ENCODE measurements at regions of chr11 and their contacts with region 1.

Region 1: DNA sequence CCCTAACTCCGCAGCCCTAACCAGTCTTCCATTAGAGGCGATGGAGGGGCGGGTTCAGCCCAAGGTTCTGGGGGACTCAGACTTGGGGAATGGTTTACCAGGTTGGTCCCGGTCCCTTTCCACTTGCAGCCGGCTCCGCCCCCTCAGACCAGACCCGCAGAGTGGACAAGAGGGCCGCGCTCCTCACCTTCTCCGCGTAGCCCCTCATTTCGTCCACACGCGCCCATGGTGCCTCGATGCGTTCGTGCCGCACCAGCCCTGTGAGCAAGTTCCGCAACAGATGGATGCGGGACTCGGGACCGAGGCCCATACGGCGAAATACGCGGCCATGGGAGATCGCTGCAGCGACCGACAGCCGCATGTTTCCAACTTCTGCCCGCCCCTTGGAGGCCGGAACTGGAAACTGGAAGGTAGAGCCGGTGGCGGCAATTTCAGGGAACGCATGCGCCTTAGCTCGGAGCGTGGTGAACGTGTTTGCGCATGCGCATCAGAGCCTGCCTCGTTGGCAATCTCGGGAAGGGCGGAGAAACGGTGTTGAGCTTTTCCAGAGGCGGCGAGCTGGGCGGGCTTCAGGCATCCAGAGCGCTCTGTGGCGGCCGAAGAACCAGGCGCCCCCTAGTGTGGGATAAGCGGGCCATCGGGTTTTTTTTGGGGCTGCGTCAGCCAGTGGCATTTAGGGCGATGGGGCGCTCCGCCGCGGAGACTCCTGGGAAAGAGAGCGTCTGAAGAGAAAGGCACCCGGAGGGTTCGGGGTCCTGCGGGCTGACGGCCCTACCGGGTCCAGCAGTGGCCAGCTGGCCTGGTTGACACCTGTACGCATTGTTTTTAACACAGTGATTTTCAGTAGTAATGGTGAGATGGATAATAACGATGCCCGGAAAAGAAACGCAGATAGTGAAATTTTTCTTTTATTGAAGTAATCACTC is at the start of gene MRPL17:
- DNase-seq: peak; percentile 99
- ATAC-seq: peak; percentile 94
- H3K4me3 ChIP-seq: peak within 1 kb of the TSS; percentile 97
- H3K27ac ChIP-seq: peak within 1 kb of the TSS; percentile 83
- H3K4me1 ChIP-seq: 0 out of 2 replicates have a peak, but pooled peaks cover 2% of the 10 kb centered on the region
- H3K27me3 ChIP-seq: no peaks in the 10 kb centered on the region
- CTCF ChIP-seq: peak; percentile 82 to 96 (median 84); a peak in 5 of 6 replicates
- EP300 ChIP-seq: no peak
- POLR2A ChIP-seq: peak; percentile 98
- RAD21 ChIP-seq: peak; percentile 66
- polyA plus RNA-seq, gene MRPL17: 170 to 171 TPM

Region 2: GRCh38 chr11:6443269-6444003 is 239.8 kb before region 1 on chr11:
- CTCF ChIA-PET with region 1: interaction called, 7 read pairs
- POLR2A ChIA-PET with region 1: no interaction called
- RAD21 ChIA-PET with region 1: interaction called, 12 read pairs
- SMC1A ChIA-PET with region 1: interaction called, 3 read pairs
- in situ Hi-C with region 1: no loop called
- intact Hi-C with region 1: no loop called
- DNase-seq: no peak
- ATAC-seq: peak; percentile 91
- H3K4me3 ChIP-seq: no peak overlapping the region
- H3K27ac ChIP-seq: no peak overlapping the region
- H3K4me1 ChIP-seq: no peaks in the 10 kb centered on the region
- H3K27me3 ChIP-seq: no peaks in the 10 kb centered on the region
- CTCF ChIP-seq: peak; percentile 85 to 89 (median 87)
- EP300 ChIP-seq: no peak
- POLR2A ChIP-seq: no peak
- RAD21 ChIP-seq: peak; percentile 91

Region 3: GRCh38 chr11:6523253-6523652 is 159.9 kb before region 1 on chr11:
- CTCF ChIA-PET with region 1: interaction called, 126 read pairs
- POLR2A ChIA-PET with region 1: interaction called, 6 read pairs
- RAD21 ChIA-PET with region 1: interaction called, 7 read pairs
- SMC1A ChIA-PET with region 1: interaction called, 11 read pairs
- in situ Hi-C with region 1: no loop called
- intact Hi-C with region 1: no loop called
- DNase-seq: no peak
- ATAC-seq: no peak
- H3K4me3 ChIP-seq: no peak overlapping the region
- H3K27ac ChIP-seq: no peak overlapping the region
- H3K4me1 ChIP-seq: peaks cover 12% of the 10 kb centered on the region; the same call in 1 of the 2 replicates
- H3K27me3 ChIP-seq: no peaks in the 10 kb centered on the region
- CTCF ChIP-seq: no peak
- EP300 ChIP-seq: no peak
- POLR2A ChIP-seq: no peak
- RAD21 ChIP-seq: no peak

Region 4: DNA sequence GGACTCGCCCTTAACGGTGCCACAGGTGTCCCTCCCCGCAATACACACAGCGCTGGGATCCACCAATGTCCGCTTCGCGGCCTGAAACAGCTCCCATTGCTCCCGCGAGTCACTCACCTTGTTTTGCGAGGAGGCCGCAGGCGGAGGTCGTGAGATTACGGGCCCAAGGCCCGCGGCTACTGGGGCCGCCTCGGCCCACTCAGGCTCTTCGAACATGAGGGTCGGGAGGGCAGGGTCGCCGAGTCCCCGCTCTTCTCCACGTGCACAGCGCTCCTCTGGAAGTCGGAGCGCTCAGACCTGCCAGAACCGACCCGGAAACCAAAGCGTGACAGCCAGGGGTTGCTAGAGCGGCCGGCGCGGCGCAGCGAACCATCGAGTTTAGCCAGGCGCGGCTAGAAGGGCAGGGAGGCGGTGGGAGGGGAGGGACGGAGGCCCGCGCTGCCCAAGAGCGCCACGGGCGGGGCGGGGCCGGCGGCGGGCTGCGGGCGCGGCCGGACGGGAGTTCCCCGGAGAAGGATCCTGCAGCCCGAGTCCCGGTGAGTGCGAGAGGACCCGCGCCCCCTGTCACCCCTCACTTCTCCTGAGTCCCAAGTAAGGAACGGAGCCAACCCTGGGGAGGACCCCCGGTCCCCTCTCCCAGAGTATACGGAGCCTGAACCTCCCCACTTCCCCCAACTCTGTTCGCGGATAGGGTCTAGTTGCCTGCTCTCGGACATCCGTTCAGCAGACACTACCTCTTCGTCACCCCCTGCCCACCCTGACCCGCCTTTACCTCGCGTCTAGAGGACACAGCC is 79.7 kb before region 1 on chr11 and contains the starts of genes ILK and RRP8:
- CTCF ChIA-PET with region 1: interaction called, 48 read pairs
- POLR2A ChIA-PET with region 1: interaction called, 29 read pairs
- RAD21 ChIA-PET with region 1: interaction called, 60 read pairs
- SMC1A ChIA-PET with region 1: interaction called, 57 read pairs
- in situ Hi-C with region 1: no loop called
- intact Hi-C with region 1: loop called (anchors 1 kb)
- DNase-seq: peak; percentile 59
- ATAC-seq: peak; percentile 83
- H3K4me3 ChIP-seq: peak within 1 kb of the TSS; percentile 96
- H3K27ac ChIP-seq: peak within 1 kb of the TSS; percentile 85
- H3K4me1 ChIP-seq: peaks cover 25% of the 10 kb centered on the region
- H3K27me3 ChIP-seq: no peaks in the 10 kb centered on the region
- CTCF ChIP-seq: peak in 1 of 3 experiments; percentile 1; a peak in 1 of 6 replicates
- EP300 ChIP-seq: peak in 1 of 2 experiments; percentile 48; a peak in 1 of 4 replicates
- POLR2A ChIP-seq: peak; percentile 94
- RAD21 ChIP-seq: 0 out of 2 replicates have a peak, but pooled peaks have one; percentile 21
- polyA plus RNA-seq, gene ILK: 51.8 to 77.8 TPM
- polyA plus RNA-seq, gene RRP8: 4.7 to 15.8 TPM

Region 5: GRCh38 chr11:6619004-6619745 is 64.0 kb before region 1 on chr11 and contains the start of gene TPP1:
- CTCF ChIA-PET with region 1: interaction called, 26 read pairs
- POLR2A ChIA-PET with region 1: interaction called, 33 read pairs
- RAD21 ChIA-PET with region 1: interaction called, 42 read pairs
- SMC1A ChIA-PET with region 1: interaction called, 34 read pairs
- in situ Hi-C with region 1: no loop called
- intact Hi-C with region 1: no loop called
- DNase-seq: peak; percentile 93
- ATAC-seq: peak; percentile 98
- H3K4me3 ChIP-seq: peak within 1 kb of the TSS; percentile 95
- H3K27ac ChIP-seq: peak within 1 kb of the TSS; percentile 90
- H3K4me1 ChIP-seq: peaks cover 5% of the 10 kb centered on the region
- H3K27me3 ChIP-seq: no peaks in the 10 kb centered on the region
- CTCF ChIP-seq: no peak
- EP300 ChIP-seq: peak; percentile 12 to 43; a peak in 2 of 4 replicates
- POLR2A ChIP-seq: peak; percentile 76
- RAD21 ChIP-seq: no peak
- polyA plus RNA-seq, gene TPP1: 7.5 to 14.4 TPM

Region 6: GRCh38 chr11:6693342-6694228 is 10.4 kb after region 1 on chr11:
- CTCF ChIA-PET with region 1: interaction called, 16 read pairs
- POLR2A ChIA-PET with region 1: no interaction called
- RAD21 ChIA-PET with region 1: no interaction called
- SMC1A ChIA-PET with region 1: interaction called, 3 read pairs
- in situ Hi-C with region 1: no loop called
- intact Hi-C with region 1: no loop called
- DNase-seq: no peak
- ATAC-seq: no peak
- H3K4me3 ChIP-seq: no peak overlapping the region
- H3K27ac ChIP-seq: no peak overlapping the region
- H3K4me1 ChIP-seq: no peaks in the 10 kb centered on the region
- H3K27me3 ChIP-seq: no peaks in the 10 kb centered on the region
- CTCF ChIP-seq: no peak
- EP300 ChIP-seq: no peak
- POLR2A ChIP-seq: no peak
- RAD21 ChIP-seq: no peak

Region 7: GRCh38 chr11:6757373-6757967 is 74.3 kb after region 1 on chr11:
- CTCF ChIA-PET with region 1: interaction called, 16 read pairs
- POLR2A ChIA-PET with region 1: no interaction called
- RAD21 ChIA-PET with region 1: interaction called, 3 read pairs
- SMC1A ChIA-PET with region 1: interaction called, 4 read pairs
- in situ Hi-C with region 1: no loop called
- intact Hi-C with region 1: no loop called
- DNase-seq: no peak
- ATAC-seq: peak; percentile 95
- H3K4me3 ChIP-seq: no peak overlapping the region
- H3K27ac ChIP-seq: no peak overlapping the region
- H3K4me1 ChIP-seq: no peaks in the 10 kb centered on the region
- H3K27me3 ChIP-seq: no peaks in the 10 kb centered on the region
- CTCF ChIP-seq: peak; percentile 79 to 89 (median 82)
- EP300 ChIP-seq: no peak
- POLR2A ChIP-seq: no peak
- RAD21 ChIP-seq: peak; percentile 95